Naive thymus-derived CD4-positive, alpha-beta T cell (primary cell): ENCODE measurements at regions of chr11 and their contacts with region 1.

Region 1: DNA sequence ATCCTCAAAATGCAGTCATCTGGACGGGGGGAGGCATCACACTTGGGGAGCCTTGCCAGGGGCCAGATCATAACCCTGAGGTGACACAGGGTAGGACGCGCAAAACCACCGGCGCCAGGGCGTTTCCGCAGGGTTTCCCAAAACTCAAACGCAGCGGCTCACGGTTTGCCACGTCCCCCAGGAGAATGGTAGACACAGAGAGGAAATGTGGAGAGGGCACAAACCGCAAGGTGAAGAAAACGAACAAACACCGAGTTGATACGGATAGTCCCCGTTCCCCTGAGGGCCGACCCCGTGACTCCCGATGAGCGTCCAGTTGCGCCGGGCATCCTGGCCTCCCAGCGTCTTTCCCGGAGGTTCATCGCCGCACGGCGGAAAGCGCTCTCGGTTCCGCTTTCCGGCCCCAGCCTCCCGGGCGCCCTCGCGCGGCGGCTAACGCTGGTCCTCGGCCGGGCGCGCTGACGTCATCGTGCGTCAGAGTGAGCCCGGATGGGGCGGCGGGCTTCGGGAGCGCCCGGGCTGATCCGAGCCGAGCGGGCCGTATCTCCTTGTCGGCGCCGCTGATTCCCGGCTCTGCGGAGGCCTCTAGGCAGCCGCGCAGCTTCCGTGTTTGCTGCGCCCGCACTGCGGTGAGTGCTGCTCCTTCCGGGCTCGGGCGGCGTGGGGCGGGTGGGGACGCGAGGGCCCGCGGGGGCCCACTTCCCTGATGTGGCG is at the start of gene BIRC2:
- DNase-seq: peak; percentile 93 to 98 (median 95)
- ATAC-seq: peak; percentile 91
- H3K4me3 ChIP-seq: peak within 1 kb of the TSS; percentile 96
- H3K4me3 Mint-ChIP-seq: peak within 1 kb of the TSS; percentile 81 to 98 (median 96)
- H3K27ac ChIP-seq: peak within 1 kb of the TSS; percentile 99
- H3K27ac Mint-ChIP-seq: peak within 1 kb of the TSS; percentile 97 to 100 (median 99)
- H3K4me1 ChIP-seq: peaks cover 17% of the 10 kb centered on the region in 2 donors
- H3K4me1 Mint-ChIP-seq: peaks cover 29 to 48% (median 44%) of the 10 kb centered on the region in 7 donors
- H3K27me3 ChIP-seq: no peaks in the 10 kb centered on the region
- H3K27me3 Mint-ChIP-seq: no peaks in the 10 kb centered on the region
- total RNA-seq, gene BIRC2: 37.5 to 103 (median 72.0) TPM

Region 2: GRCh38 chr11:102254045-102254444 is 92.9 kb before region 1 on chr11:
- CTCF ChIA-PET with region 1: no interaction called
- POLR2A ChIA-PET with region 1: no interaction called
- intact Hi-C with region 1: no loop called
- DNase-seq: no peak
- ATAC-seq: no peak
- H3K4me3 ChIP-seq: no peak overlapping the region
- H3K4me3 Mint-ChIP-seq: no peak overlapping the region
- H3K27ac ChIP-seq: no peak overlapping the region
- H3K27ac Mint-ChIP-seq: no peak overlapping the region
- H3K4me1 ChIP-seq: no peaks in the 10 kb centered on the region
- H3K4me1 Mint-ChIP-seq: no peaks in the 10 kb centered on the region
- H3K27me3 ChIP-seq: no peaks in the 10 kb centered on the region
- H3K27me3 Mint-ChIP-seq: no peaks in the 10 kb centered on the region

Region 3: DNA sequence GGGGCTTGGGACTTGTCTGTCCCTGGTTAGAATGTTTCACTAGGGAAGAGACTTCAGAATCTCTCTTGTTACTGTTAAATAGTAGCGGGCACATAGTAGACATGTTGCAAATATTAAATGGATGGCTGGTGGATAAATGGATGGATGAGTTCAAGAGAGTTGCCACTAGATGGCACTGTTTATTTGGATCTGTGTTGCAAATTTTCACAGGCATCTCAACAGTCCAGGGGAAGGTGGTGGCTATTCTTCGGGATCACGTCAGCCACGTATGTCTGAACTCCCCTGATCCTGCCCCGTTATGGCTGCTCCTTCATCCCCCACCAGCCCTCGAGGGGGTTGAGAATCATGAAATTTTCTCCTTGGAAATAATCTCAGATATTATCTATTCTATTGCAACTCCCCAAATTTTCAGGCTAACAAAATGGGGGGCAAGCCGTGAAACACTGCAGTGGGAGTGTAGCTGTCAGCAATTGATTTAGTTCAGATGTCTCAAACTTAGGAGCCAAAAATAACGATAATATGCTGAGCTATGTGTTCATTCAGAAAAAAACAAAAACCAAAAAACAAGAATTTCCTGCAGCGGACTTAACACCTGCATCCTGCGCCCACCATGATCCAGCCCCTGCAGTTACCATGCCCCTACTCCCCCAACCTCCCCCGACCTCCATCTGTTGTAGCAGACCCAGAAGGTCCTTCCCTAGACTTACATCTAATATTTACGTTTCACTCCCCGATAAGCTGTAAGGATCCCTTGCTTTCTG is 58.8 kb before region 1 on chr11:
- CTCF ChIA-PET with region 1: interaction called, 52 read pairs
- POLR2A ChIA-PET with region 1: interaction called, 12 read pairs
- intact Hi-C with region 1: loop called (anchors 1 kb)
- DNase-seq: peak in 7 of 9 donors; percentile 51 to 73 (median 66)
- ATAC-seq: peak; percentile 86
- H3K4me3 ChIP-seq: no peak overlapping the region
- H3K4me3 Mint-ChIP-seq: peak overlapping the region in 9 of 10 donors; percentile 12 to 73 (median 60)
- H3K27ac ChIP-seq: no peak overlapping the region
- H3K27ac Mint-ChIP-seq: peak overlapping the region in 6 of 9 donors; percentile 15 to 56 (median 38)
- H3K4me1 ChIP-seq: peaks cover 3 to 5% of the 10 kb centered on the region in 2 donors
- H3K4me1 Mint-ChIP-seq: peaks cover 9 to 33% (median 27%) of the 10 kb centered on the region in 7 donors
- H3K27me3 ChIP-seq: no peaks in the 10 kb centered on the region
- H3K27me3 Mint-ChIP-seq: no peaks in the 10 kb centered on the region

Region 4: GRCh38 chr11:102317099-102317767 is 29.7 kb before region 1 on chr11 and contains the start of gene BIRC3:
- CTCF ChIA-PET with region 1: interaction called, 4 read pairs
- POLR2A ChIA-PET with region 1: interaction called, 5 read pairs
- intact Hi-C with region 1: loop called (anchors 1 kb)
- DNase-seq: peak; percentile 77 to 98 (median 93)
- ATAC-seq: peak; percentile 94
- H3K4me3 ChIP-seq: peak within 1 kb of the TSS; percentile 74
- H3K4me3 Mint-ChIP-seq: peak within 1 kb of the TSS; percentile 85 to 98 (median 96)
- H3K27ac ChIP-seq: peak within 1 kb of the TSS; percentile 97
- H3K27ac Mint-ChIP-seq: peak within 1 kb of the TSS; percentile 93 to 99 (median 98)
- H3K4me1 ChIP-seq: peaks cover 43 to 58% of the 10 kb centered on the region in 2 donors
- H3K4me1 Mint-ChIP-seq: peaks cover 44 to 87% (median 74%) of the 10 kb centered on the region in 7 donors
- H3K27me3 ChIP-seq: no peaks in the 10 kb centered on the region
- H3K27me3 Mint-ChIP-seq: peaks cover 0 to 2% (median 0%) of the 10 kb centered on the region in 5 donors
- total RNA-seq, gene BIRC3: 62.3 to 160 (median 128) TPM

Region 5: GRCh38 chr11:102390667-102391465 is 44.0 kb after region 1 on chr11:
- CTCF ChIA-PET with region 1: interaction called, 27 read pairs
- POLR2A ChIA-PET with region 1: interaction called, 6 read pairs
- intact Hi-C with region 1: no loop called
- DNase-seq: peak in 8 of 9 donors; percentile 20 to 55 (median 40)
- ATAC-seq: peak; percentile 92
- H3K4me3 ChIP-seq: no peak overlapping the region
- H3K4me3 Mint-ChIP-seq: peak overlapping the region in 1 of 10 donors; percentile 12
- H3K27ac ChIP-seq: no peak overlapping the region
- H3K27ac Mint-ChIP-seq: peak overlapping the region in 8 of 9 donors; percentile 59 to 91 (median 77)
- H3K4me1 ChIP-seq: peaks cover 0 to 16% of the 10 kb centered on the region in 2 donors
- H3K4me1 Mint-ChIP-seq: peaks cover 10 to 54% (median 48%) of the 10 kb centered on the region in 7 donors
- H3K27me3 ChIP-seq: no peaks in the 10 kb centered on the region
- H3K27me3 Mint-ChIP-seq: no peaks in the 10 kb centered on the region

Region 6: DNA sequence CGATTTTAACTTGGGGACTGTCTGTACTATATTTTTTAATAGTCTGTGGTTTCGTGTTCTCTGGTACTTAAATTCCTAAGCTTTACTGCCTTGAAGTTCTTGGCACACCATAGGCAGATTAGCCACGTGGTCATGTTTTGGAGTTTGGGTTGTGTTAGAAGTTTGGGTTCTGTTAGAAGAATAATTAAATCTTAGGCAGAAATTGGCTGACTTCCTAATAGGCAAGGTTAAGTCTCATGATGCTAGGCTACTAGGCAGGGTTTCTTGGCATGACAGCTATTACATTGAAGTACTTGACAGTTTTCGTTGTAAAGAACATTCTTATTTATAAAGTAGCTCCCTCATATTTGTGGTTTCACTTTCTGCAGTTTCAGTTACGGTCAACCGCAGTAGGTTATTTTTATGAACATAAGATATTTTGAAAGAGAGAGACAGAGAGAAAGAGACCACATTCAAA is 213.7 kb after region 1 on chr11:
- CTCF ChIA-PET with region 1: interaction called, 3 read pairs
- POLR2A ChIA-PET with region 1: interaction called, 3 read pairs
- intact Hi-C with region 1: loop called in 1 of 2 experiments (anchors 5 kb)
- DNase-seq: peak in 6 of 9 donors; percentile 2 to 34 (median 12)
- ATAC-seq: peak; percentile 54
- H3K4me3 ChIP-seq: peak overlapping the region; percentile 34
- H3K4me3 Mint-ChIP-seq: peak overlapping the region; percentile 42 to 81 (median 78)
- H3K27ac ChIP-seq: peak overlapping the region; percentile 63
- H3K27ac Mint-ChIP-seq: peak overlapping the region; percentile 70 to 96 (median 88)
- H3K4me1 ChIP-seq: peaks cover 21 to 28% of the 10 kb centered on the region in 2 donors
- H3K4me1 Mint-ChIP-seq: peaks cover 27 to 50% (median 45%) of the 10 kb centered on the region in 7 donors
- H3K27me3 ChIP-seq: no peaks in the 10 kb centered on the region
- H3K27me3 Mint-ChIP-seq: peaks cover 0 to 2% (median 0%) of the 10 kb centered on the region in 5 donors

Region 7: GRCh38 chr11:103633068-103633788 is 1286.3 kb after region 1 on chr11:
- CTCF ChIA-PET with region 1: no interaction called
- POLR2A ChIA-PET with region 1: no interaction called
- intact Hi-C with region 1: no loop called
- DNase-seq: no peak
- ATAC-seq: no peak
- H3K4me3 ChIP-seq: no peak overlapping the region
- H3K4me3 Mint-ChIP-seq: no peak overlapping the region
- H3K27ac ChIP-seq: no peak overlapping the region
- H3K27ac Mint-ChIP-seq: no peak overlapping the region
- H3K4me1 ChIP-seq: no peaks in the 10 kb centered on the region
- H3K4me1 Mint-ChIP-seq: peaks cover 0 to 2% (median 0%) of the 10 kb centered on the region in 7 donors
- H3K27me3 ChIP-seq: no peaks in the 10 kb centered on the region
- H3K27me3 Mint-ChIP-seq: peaks cover 0 to 14% (median 4%) of the 10 kb centered on the region in 5 donors